ENCODE measurements at regions of chr10 and their contacts with region 1.

Region 1: DNA sequence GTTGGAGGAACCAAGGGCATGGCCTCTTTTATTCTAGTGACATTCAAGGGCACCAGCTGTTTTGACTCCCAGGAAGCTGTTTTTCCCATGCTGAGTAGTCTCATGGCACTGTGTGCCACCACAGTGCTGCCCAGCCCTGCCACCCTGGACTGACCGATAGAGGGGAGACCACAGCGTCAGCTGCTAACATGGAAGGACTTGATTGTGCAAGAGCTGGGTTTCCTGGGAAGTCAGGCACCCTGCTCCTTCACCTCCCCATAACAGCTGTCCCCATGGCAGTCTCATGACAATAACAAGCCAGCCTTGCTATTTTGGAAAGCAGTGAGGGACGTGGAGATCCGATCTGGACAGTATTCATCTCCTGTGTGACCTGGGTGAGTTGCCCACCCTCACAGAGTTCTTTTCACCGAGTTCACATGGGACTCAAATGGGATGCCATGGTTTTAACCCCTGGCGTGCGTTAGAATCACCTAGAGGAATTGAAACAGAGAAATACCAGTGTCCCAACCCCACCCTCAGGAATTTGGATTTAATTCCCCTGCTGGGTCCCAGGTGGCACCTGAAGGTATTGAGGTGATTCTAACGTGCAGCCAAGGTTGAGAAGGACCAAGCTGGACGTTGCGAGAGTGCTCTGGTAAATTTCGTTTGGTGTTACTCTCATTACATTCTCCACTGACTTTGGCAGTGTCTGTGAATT is 174.8 kb downstream of the CELF2 start:
- DNase-seq: no peak
- H3K4me3 ChIP-seq: no peak overlapping the region
- H3K4me3 Mint-ChIP-seq: peak overlapping the region; percentile 48 to 81 (median 63)
- H3K27ac ChIP-seq: no peak overlapping the region
- H3K27ac Mint-ChIP-seq: peak overlapping the region in 6 of 8 donors; percentile 90 to 97 (median 90)
- H3K4me1 ChIP-seq: peaks cover 92% of the 10 kb centered on the region
- H3K4me1 Mint-ChIP-seq: peaks cover 34 to 95% (median 34%) of the 10 kb centered on the region in 3 donors
- H3K27me3 ChIP-seq: no peaks in the 10 kb centered on the region
- H3K27me3 Mint-ChIP-seq: no peaks in the 10 kb centered on the region

Region 2: GRCh38 chr10:11170993-11171851 is 21.2 kb before region 1 on chr10:
- CTCF ChIA-PET with region 1: no interaction called
- POLR2A ChIA-PET with region 1: interaction called, 13 read pairs
- DNase-seq: peak in 1 of 5 donors; percentile 31
- H3K4me3 ChIP-seq: peak overlapping the region; percentile 72
- H3K4me3 Mint-ChIP-seq: no peak overlapping the region
- H3K27ac ChIP-seq: peak overlapping the region; percentile 92
- H3K27ac Mint-ChIP-seq: peak overlapping the region in 1 of 8 donors; percentile 8
- H3K4me1 ChIP-seq: peaks cover 81% of the 10 kb centered on the region
- H3K4me1 Mint-ChIP-seq: peaks cover 0 to 7% (median 6%) of the 10 kb centered on the region in 3 donors
- H3K27me3 ChIP-seq: no peaks in the 10 kb centered on the region
- H3K27me3 Mint-ChIP-seq: no peaks in the 10 kb centered on the region

Measured in CD8-positive, alpha-beta memory T cell (primary cell).